Thyroid gland (tissue), 4 donors: ENCODE measurements at regions of chr3 and their contacts with region 1.

Region 1: GRCh38 chr3:63945558-63946096 is 33.4 kb upstream of the SCAANT1 start:
- DNase-seq: no peak
- H3K4me3 ChIP-seq: no peak overlapping the region
- H3K27ac ChIP-seq: no peak overlapping the region
- H3K4me1 ChIP-seq: peaks cover 0 to 7% of the 10 kb centered on the region in 2 donors
- H3K27me3 ChIP-seq: no peaks in the 10 kb centered on the region
- CTCF ChIP-seq: no peak
- POLR2A ChIP-seq: no peak

Region 2: DNA sequence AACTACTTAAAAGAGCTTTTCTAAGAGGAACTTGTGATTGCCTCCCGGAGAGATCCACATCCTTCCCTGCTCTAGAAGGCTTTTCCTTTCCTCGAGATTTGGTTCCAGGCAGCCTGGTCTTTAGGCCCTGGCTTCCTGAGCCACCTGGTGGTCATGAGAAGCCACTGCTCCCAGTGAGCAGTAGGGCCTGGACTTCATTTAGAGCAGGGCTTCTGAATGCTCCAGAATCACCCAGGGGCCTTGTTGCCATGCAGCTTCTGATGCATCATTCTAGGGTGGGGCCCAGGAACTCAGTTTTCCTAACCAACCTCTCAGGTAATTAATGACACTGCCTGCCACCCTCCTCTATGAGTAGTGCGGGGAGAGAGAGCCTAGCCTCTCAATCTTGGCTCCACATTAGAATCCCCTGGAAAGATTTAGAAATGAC is 48.0 kb after region 1 on chr3:
- intact Hi-C with region 1: loop called (anchors 5 kb)
- DNase-seq: peak; percentile 66 to 68
- H3K4me3 ChIP-seq: no peak overlapping the region
- H3K27ac ChIP-seq: no peak overlapping the region
- H3K4me1 ChIP-seq: no peaks in the 10 kb centered on the region
- H3K27me3 ChIP-seq: no peaks in the 10 kb centered on the region
- CTCF ChIP-seq: peak; percentile 65 to 96 (median 87)
- POLR2A ChIP-seq: no peak

Region 3: DNA sequence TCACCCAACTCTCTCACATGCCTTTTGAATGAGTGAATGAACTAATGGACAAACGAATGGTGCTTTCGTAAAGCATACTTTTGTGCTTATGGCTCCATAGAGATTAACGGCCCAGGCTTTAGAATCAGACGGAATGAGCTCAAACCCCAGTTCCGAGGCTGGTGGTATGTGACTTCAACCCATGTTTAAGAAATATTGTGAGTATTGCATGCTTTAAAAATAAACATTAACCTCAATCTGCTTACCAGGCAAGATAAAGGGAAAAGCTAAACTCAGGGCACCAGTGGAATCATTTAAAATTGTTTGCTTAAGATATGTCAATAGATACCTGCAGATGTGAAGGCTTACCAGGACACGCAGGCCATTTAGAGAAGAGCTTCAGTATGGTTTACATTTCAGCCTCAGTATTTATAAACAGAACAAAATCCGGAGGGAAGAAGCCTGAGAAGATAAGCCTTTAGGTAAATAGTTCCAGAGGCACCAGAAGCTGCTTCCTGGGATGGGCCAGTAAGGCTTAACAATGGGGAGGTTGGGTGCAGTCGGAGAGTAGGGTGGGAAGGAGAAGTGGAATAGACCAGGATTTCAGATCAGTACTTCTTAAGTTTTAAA is 555.8 kb after region 1 on chr3:
- intact Hi-C with region 1: no loop called
- DNase-seq: no peak
- H3K4me3 ChIP-seq: no peak overlapping the region
- H3K27ac ChIP-seq: no peak overlapping the region
- H3K4me1 ChIP-seq: no peaks in the 10 kb centered on the region
- H3K27me3 ChIP-seq: no peaks in the 10 kb centered on the region
- CTCF ChIP-seq: no peak
- POLR2A ChIP-seq: no peak